Mammary epithelial cell (primary cell): ENCODE measurements at regions of chr9 and their contacts with region 1.

Region 1: DNA sequence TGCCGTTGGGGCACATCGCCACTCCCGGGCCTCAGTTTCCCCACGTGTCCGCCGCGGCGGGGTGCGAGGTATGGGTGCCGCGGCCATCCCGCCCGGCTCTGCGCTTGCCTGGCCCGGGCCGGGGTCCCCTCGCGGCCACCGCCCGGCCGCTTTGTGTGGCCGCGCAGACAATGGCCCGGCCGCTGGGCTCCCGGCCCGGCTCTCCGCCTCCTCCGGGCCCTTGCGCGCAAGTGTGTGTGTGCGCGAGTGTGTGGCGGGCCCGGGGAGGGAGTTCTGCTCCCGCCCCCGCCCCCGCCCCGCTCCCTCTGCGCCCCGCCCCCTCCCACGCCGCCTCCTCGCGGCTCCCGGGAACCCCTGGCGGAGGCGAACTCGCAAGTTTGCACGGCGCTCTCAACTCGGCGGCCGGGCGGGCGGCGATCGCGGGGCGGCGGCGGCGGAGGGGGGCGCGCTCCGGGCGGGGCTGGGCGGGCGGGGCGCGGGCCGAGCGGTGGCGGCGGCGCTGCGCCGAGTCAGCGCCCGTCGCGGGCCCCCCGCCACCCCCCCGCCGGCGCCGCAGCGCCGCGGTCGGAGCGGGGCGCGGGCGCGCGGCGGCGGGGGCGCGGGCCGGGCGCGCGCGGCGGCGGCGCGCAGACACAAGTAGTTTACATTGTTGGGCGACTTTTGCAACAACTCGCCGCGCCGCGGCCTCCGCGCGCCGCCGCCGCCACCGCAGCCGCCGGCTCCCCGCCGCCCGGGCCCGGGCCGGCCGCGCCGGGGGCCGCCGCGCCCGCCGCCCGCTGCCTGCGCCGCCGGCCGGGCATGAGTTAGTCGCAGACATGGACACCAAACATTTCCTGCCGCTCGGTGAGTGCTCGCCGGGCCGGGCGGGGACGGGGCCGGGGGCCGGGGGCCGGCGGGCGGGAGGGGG is at the start of gene RXRA:
- DNase-seq: peak; percentile 77
- H3K4me3 ChIP-seq: peak within 1 kb of the TSS; percentile 64 to 78 (median 69)
- H3K27ac ChIP-seq: peak within 1 kb of the TSS; percentile 77
- H3K4me1 ChIP-seq: peaks cover 64% of the 10 kb centered on the region
- H3K27me3 ChIP-seq: no peaks in the 10 kb centered on the region
- CTCF ChIP-seq: no peak
- total RNA-seq, gene RXRA: 31.0 to 39.2 TPM

Region 2: GRCh38 chr9:134231330-134231745 is 94.7 kb before region 1 on chr9:
- CTCF ChIA-PET with region 1: no interaction called
- dilution Hi-C with region 1: loop called (anchors 5 kb)
- in situ Hi-C with region 1: no loop called
- intact Hi-C with region 1: loop called (anchors 5 kb)
- DNase-seq: no peak
- H3K4me3 ChIP-seq: no peak overlapping the region
- H3K27ac ChIP-seq: no peak overlapping the region
- H3K4me1 ChIP-seq: peaks cover 7% of the 10 kb centered on the region
- H3K27me3 ChIP-seq: peaks cover 5% of the 10 kb centered on the region
- CTCF ChIP-seq: no peak

Region 3: DNA sequence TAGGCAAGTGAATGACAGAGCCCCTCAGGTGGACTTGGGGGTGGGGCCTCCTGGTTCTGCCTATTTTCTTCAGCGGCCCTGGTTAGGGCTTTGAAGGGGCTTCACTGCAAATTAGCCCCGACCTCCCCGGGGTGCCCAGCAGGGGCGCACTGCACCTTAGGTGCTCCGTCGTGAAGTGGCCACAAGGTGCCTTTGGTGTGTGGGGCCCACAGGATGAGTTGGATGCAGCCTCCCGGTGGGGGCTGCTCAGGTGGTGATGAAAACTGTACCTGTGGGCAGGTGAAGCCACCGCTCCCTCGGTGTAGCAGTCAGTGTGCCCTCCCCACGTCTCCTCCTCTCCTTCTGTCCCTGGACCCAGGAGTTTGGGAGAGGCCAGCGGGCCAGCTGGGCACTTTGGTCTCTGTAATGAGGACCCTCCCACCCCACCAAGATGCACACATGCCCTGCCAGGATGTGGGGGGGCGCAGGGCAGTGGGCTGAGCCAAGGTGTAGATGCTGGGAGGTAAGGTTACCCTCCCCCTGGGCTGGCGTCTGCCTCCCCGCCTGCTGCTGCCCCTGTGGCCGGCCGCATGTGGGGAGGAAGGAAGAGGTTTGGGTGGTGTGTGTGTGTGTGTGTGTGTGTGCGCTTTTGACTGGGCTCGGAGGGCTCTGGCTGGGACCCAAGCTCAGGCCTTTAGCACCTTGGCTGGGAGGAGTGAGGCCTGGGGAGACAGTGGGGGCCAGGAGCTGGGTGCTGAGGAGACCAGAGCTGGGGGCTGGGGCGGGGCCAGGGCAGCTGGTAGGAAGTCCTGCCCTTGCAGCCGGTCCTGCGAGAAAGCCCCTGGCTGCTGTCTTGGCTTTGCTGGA is 55.8 kb after region 1 on chr9:
- CTCF ChIA-PET with region 1: interaction called, 3 read pairs
- dilution Hi-C with region 1: no loop called
- in situ Hi-C with region 1: no loop called
- intact Hi-C with region 1: loop called (anchors 2 kb)
- DNase-seq: no peak
- H3K4me3 ChIP-seq: no peak overlapping the region
- H3K27ac ChIP-seq: no peak overlapping the region
- H3K4me1 ChIP-seq: peaks cover 74% of the 10 kb centered on the region
- H3K27me3 ChIP-seq: no peaks in the 10 kb centered on the region
- CTCF ChIP-seq: peak in 1 of 2 donors; percentile 11

Region 4: GRCh38 chr9:134418988-134419683 is 93.1 kb after region 1 on chr9:
- CTCF ChIA-PET with region 1: no interaction called
- dilution Hi-C with region 1: no loop called
- in situ Hi-C with region 1: no loop called
- intact Hi-C with region 1: no loop called
- DNase-seq: no peak
- H3K4me3 ChIP-seq: no peak overlapping the region
- H3K27ac ChIP-seq: no peak overlapping the region
- H3K4me1 ChIP-seq: peaks cover 3% of the 10 kb centered on the region
- H3K27me3 ChIP-seq: no peaks in the 10 kb centered on the region
- CTCF ChIP-seq: no peak

Region 5: GRCh38 chr9:134434894-134435506 is 108.9 kb after region 1 on chr9:
- CTCF ChIA-PET with region 1: no interaction called
- dilution Hi-C with region 1: loop called (anchors 5 kb)
- in situ Hi-C with region 1: no loop called
- intact Hi-C with region 1: loop called (anchors 2 kb)
- DNase-seq: peak; percentile 81
- H3K4me3 ChIP-seq: no peak overlapping the region
- H3K27ac ChIP-seq: no peak overlapping the region
- H3K4me1 ChIP-seq: peaks cover 37% of the 10 kb centered on the region
- H3K27me3 ChIP-seq: no peaks in the 10 kb centered on the region
- CTCF ChIP-seq: no peak